ENCODE measurements at regions of chr11 and their contacts with region 1.

Region 1: DNA sequence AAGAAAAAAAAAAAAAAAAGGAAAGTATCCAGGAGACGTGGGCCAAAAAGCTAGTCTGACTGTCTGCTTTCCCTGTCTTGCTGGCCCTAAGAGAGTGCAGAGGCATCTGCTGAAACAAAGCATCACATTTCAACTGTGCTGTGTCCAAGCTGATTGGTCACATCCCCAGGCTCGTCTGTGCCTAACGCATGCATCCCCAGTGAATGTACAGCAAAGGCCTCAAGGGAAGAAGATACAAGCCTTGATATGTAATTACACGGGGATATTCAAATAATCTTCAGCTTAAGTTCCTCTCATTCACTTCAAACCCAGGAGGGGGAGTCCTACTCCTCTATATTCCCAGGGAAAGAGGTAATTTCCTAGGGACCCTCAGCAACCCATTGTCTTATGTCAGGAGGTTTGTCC is 5.4 kb upstream of the SORL1 start:
- DNase-seq: peak in 2 of 3 donors; percentile 32 to 39
- H3K4me3 ChIP-seq: no peak overlapping the region
- H3K27ac ChIP-seq: no peak overlapping the region
- H3K4me1 ChIP-seq: peaks cover 25 to 44% (median 32%) of the 10 kb centered on the region in 4 experiments
- H3K27me3 ChIP-seq: no peaks in the 10 kb centered on the region

Region 2: GRCh38 chr11:121341609-121342008 is 105.1 kb before region 1 on chr11:
- CTCF ChIA-PET with region 1: no interaction called
- POLR2A ChIA-PET with region 1: no interaction called
- DNase-seq: no peak
- H3K4me3 ChIP-seq: no peak overlapping the region
- H3K27ac ChIP-seq: no peak overlapping the region
- H3K4me1 ChIP-seq: peaks cover 4 to 14% (median 11%) of the 10 kb centered on the region in 4 experiments
- H3K27me3 ChIP-seq: no peaks in the 10 kb centered on the region

Region 3: GRCh38 chr11:121426476-121427399 is 20.0 kb before region 1 on chr11:
- CTCF ChIA-PET with region 1: interaction called, 10 read pairs
- POLR2A ChIA-PET with region 1: interaction called, 4 read pairs
- DNase-seq: peak; percentile 41 to 70 (median 60)
- H3K4me3 ChIP-seq: peak overlapping the region in 6 of 7 experiments; percentile 35 to 79 (median 52)
- H3K27ac ChIP-seq: no peak overlapping the region
- H3K4me1 ChIP-seq: peaks cover 5 to 31% (median 21%) of the 10 kb centered on the region in 4 experiments
- H3K27me3 ChIP-seq: no peaks in the 10 kb centered on the region

Region 4: DNA sequence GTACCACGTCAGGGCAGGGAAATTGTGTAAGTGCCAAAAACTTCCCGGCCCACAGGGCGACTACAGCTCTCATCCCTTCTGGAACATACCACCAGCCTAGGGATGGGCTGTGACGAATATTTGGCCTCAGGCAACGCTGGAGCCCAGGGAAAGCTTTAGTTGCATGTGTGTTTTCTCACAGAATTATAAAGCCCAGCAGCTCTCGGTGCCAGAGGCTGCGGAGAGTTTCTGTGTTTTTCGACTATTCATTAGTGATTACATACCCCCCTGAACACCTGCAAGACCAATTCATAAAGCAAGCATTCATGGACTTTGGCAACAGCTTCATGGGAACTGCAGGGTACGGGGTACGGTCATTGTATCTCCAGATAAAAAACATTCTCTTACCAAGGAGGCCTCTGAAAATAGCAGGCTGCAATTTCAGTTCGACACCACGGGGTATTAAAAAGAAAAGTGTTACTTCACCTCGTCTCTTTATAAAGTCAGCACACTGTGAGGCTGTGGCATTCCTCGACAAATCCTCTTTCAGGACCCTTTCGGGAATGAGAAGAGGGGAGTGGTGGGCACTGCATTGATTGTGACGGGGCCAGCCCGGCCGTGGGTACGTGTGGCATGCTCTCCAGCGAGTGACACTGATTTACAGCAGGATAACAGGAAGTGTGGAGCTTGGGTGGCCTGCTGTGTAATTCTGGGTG is 249.6 kb after region 1 on chr11:
- CTCF ChIA-PET with region 1: no interaction called
- POLR2A ChIA-PET with region 1: no interaction called
- DNase-seq: peak in 2 of 3 donors; percentile 26 to 52
- H3K4me3 ChIP-seq: no peak overlapping the region
- H3K27ac ChIP-seq: no peak overlapping the region
- H3K4me1 ChIP-seq: peaks cover 0 to 8% (median 1%) of the 10 kb centered on the region in 4 experiments
- H3K27me3 ChIP-seq: no peaks in the 10 kb centered on the region

Measured in common myeloid progenitor, CD34-positive (primary cell).